ENCODE measurements at regions of chr2 and their contacts with region 1.

Region 1: DNA sequence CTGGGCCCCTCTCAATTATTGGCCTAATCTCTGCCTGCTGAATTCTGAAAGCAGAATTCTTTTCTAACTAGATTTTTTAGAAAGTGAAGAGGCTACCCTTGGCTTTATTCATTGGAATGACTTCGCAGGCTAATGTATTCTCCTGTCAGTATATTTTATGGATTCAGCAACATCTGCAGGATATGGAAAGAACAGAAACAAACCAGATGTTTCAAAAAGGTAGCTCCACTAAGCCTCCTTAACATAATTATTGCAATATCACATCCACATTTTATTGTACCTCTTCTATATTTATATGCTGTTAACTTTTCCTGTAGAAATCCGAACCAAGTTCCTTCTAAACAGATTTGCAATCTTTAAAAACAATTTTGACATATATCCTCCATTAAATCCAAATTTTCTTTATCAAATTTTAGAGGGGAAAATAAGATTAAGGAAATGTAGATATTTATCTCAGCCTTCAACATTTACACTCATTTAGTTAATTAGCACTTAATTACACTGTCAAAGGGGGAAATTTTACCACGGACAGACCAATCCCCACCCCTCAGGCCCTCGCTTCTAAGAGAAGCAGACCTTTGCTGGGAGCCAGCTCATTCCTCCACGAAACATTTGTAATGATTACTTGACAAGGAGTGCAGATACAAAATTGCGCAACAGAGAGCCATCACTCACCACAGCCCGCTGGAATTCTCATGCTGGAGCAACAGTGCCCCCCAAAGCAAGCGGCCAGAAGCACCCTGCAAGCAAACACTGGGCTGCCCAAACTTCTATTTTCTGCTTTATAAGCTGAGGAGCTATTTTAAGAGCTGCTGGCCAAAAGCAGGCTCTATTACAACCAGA is 253.4 kb downstream of the ETAA1 start:
- DNase-seq: peak; percentile 88
- H3K4me3 Mint-ChIP-seq: no peak overlapping the region
- H3K27ac Mint-ChIP-seq: peak overlapping the region; percentile 78
- H3K4me1 Mint-ChIP-seq: peaks cover 25% of the 10 kb centered on the region
- H3K27me3 Mint-ChIP-seq: no peaks in the 10 kb centered on the region
- CTCF ChIP-seq: peak; percentile 84

Region 2: DNA sequence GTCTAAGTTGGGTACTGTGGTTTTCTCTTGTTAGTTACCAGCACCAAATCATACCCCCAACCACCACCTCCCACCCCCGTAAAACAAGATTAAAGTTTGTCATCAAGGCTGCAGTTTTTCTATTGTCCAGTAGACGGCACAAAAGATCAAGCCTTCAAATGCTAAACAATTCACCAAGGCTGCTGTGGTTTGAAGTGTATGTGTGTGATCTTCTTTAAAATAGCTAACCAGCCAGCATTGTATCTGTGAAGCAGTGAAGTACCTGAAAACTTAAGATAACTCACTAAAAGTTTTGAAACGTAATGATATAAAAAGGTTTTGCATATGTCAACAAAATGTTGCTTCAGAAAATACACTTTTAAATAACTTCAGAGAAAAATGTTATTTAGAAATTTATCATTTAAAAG is 1221.4 kb before region 1 on chr2:
- CTCF ChIA-PET with region 1: no interaction called
- POLR2A ChIA-PET with region 1: interaction called, 3 read pairs
- intact Hi-C with region 1: loop called (anchors 1 kb)
- DNase-seq: peak; percentile 71
- H3K4me3 Mint-ChIP-seq: no peak overlapping the region
- H3K27ac Mint-ChIP-seq: no peak overlapping the region
- H3K4me1 Mint-ChIP-seq: no peaks in the 10 kb centered on the region
- H3K27me3 Mint-ChIP-seq: peaks cover 11% of the 10 kb centered on the region
- CTCF ChIP-seq: peak; percentile 78

Region 3: DNA sequence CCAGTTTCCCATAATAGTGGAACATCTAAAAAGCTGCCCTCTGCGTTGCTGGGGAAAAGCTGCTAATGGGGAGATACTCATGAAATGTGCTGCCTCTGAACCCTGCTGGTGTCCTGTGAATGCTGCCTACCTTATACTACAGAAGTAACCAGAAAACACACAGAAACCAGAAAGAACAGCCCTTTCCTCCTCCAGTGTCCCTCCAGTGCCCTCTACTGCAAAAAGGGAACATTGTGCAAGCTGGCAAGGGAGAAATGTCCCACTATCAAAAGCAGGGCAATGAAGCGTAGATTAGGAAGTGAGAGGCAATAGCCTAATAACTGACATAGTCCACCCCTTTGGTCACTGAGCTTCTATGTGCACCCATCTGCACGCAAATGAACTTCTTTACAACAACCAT is 416.1 kb before region 1 on chr2:
- CTCF ChIA-PET with region 1: interaction called, 4 read pairs
- POLR2A ChIA-PET with region 1: interaction called, 4 read pairs
- intact Hi-C with region 1: loop called (anchors 1 kb)
- DNase-seq: peak; percentile 16
- H3K4me3 Mint-ChIP-seq: no peak overlapping the region
- H3K27ac Mint-ChIP-seq: no peak overlapping the region
- H3K4me1 Mint-ChIP-seq: no peaks in the 10 kb centered on the region
- H3K27me3 Mint-ChIP-seq: no peaks in the 10 kb centered on the region
- CTCF ChIP-seq: peak; percentile 38

Region 4: DNA sequence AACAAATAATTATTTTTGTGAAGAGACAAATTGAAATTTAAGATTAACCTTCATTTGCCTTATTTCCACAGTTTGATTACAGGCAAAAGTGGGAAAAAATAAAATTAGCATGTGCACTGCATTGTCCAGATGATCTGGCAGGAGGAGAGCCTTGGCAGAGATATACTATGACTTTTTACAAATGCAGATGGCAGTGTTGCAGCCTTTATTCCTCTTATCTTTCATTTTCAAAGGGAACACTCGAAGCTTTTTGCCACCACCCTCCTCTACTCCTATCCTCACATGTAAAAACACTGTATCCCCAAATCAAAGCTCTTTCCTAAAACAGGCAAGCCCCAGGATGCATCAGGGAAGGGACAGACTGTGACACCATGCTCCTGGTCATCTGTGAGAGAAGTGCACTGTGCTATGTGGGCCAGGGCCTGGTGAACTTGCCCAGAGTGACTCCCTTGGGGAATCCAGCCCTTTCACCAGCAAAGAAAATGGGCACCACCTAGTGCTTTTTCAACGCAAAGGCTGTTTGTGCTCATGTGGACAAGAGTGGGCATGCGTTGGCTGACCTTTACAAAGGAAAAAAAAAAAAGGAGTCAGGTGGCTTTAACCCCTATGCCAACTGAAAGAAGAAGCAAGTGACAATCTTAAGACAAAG is 328.0 kb before region 1 on chr2:
- CTCF ChIA-PET with region 1: interaction called, 3 read pairs
- POLR2A ChIA-PET with region 1: no interaction called
- intact Hi-C with region 1: loop called (anchors 1 kb)
- DNase-seq: peak; percentile 76
- H3K4me3 Mint-ChIP-seq: no peak overlapping the region
- H3K27ac Mint-ChIP-seq: peak overlapping the region; percentile 57
- H3K4me1 Mint-ChIP-seq: peaks cover 6% of the 10 kb centered on the region
- H3K27me3 Mint-ChIP-seq: no peaks in the 10 kb centered on the region
- CTCF ChIP-seq: peak; percentile 44

Region 5: DNA sequence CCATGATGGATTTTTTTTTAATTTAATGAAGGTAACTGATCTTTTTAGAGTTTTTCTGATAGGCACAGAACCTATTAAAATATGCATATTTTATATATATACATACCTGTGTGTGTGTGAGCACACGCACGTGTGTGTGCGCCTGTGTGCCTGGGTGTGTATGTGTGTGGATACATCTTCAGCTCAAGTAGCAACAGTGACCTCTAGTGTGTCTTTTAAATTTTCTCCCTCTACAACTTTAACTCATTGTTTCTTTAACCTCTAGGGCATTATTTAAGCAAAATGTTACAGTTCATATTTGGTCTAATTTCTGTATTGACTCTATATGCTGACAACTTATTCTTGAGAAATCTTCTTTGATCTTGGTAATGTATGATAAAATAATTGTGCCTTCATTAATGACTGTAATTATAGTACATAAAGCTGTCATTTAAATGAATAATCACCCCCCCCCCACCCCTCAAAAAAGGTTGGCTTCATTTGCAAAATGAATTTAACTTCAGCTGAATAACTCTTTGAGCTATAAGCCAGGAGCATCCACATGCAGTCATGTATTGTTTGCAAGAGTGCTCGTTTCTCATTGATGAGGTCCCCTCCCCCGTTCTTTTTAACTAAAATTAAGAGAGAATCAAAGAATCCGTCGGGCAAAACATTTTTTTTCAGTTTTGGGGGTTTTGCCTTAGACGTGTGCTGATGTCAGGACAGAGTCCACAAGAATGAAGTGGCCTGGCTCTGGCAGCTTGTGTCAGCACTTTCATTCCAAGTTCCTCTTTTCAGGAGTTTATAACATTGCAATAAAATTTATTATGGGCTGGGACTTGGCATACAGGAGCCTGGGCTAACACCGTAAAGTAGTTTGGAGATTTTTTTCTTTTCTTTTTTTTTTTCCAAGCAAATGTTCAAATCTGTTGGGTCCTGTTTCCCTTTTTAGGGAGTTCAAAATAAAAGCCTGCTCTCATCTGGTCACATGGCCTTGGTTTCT is 173.4 kb before region 1 on chr2:
- CTCF ChIA-PET with region 1: interaction called, 4 read pairs
- POLR2A ChIA-PET with region 1: interaction called, 10 read pairs
- intact Hi-C with region 1: loop called (anchors 1 kb)
- DNase-seq: peak; percentile 56
- H3K4me3 Mint-ChIP-seq: no peak overlapping the region
- H3K27ac Mint-ChIP-seq: peak overlapping the region; percentile 7
- H3K4me1 Mint-ChIP-seq: no peaks in the 10 kb centered on the region
- H3K27me3 Mint-ChIP-seq: no peaks in the 10 kb centered on the region
- CTCF ChIP-seq: peak; percentile 50

Region 6: DNA sequence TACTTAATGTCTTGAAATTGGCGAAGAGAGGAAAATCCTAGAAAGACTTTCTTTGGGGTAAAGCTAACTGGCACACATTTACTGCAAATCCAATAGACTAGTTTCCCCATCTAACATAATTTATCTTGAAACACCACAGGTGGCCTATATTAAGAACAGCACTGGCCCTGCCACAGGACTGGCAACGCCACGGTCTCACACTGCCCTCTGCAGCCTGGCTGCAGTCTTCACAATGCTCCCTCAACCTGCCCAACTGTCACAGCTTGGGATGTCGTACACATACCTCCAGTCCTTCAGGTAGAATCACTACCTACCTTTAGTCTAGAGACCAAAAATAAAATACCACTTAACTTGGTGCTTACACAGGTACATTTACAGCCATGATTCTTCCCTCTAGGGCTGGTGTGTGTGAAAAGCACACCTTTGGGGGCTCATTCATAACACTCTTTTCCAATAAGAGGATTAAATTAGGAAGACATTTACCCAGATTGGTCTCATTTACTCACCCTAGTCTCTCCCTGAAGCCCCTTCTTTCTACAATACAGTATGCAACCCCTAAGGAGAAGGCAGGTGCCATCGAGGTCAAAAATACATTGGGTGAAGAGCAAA is 190.1 kb after region 1 on chr2:
- CTCF ChIA-PET with region 1: interaction called, 15 read pairs
- POLR2A ChIA-PET with region 1: interaction called, 8 read pairs
- intact Hi-C with region 1: loop called (anchors 2 kb)
- DNase-seq: peak; percentile 73
- H3K4me3 Mint-ChIP-seq: no peak overlapping the region
- H3K27ac Mint-ChIP-seq: no peak overlapping the region
- H3K4me1 Mint-ChIP-seq: peaks cover 7% of the 10 kb centered on the region
- H3K27me3 Mint-ChIP-seq: no peaks in the 10 kb centered on the region
- CTCF ChIP-seq: peak; percentile 90

Region 7: GRCh38 chr2:68031542-68032160 is 381.1 kb after region 1 on chr2:
- CTCF ChIA-PET with region 1: interaction called, 4 read pairs
- POLR2A ChIA-PET with region 1: interaction called, 4 read pairs
- intact Hi-C with region 1: loop called (anchors 1 kb)
- DNase-seq: peak; percentile 71
- H3K4me3 Mint-ChIP-seq: no peak overlapping the region
- H3K27ac Mint-ChIP-seq: no peak overlapping the region
- H3K4me1 Mint-ChIP-seq: peaks cover 5% of the 10 kb centered on the region
- H3K27me3 Mint-ChIP-seq: no peaks in the 10 kb centered on the region
- CTCF ChIP-seq: peak; percentile 66

Measured in MCF 10A (cell line).